Right ventricle myocardium inferior (tissue), 1 donor: ENCODE measurements at regions of chr17 and their contacts with region 1.

Region 1: GRCh38 chr17:82917691-82918345 is 78.0 kb upstream of the ZNF750 start:
- DNase-seq: no peak
- ATAC-seq: no peak

Region 2: GRCh38 chr17:82781894-82782274 is 135.9 kb before region 1 on chr17:
- intact Hi-C with region 1: loop called (anchors 2 kb)
- DNase-seq: peak; percentile 91
- ATAC-seq: peak; percentile 95

Region 3: GRCh38 chr17:82876602-82877379 is 41.0 kb before region 1 on chr17:
- intact Hi-C with region 1: loop called (anchors 5 kb)
- DNase-seq: peak; percentile 81
- ATAC-seq: peak; percentile 96